Aorta (tissue), 5 donors: ENCODE measurements at regions of chr2 and their contacts with region 1.

Region 1: DNA sequence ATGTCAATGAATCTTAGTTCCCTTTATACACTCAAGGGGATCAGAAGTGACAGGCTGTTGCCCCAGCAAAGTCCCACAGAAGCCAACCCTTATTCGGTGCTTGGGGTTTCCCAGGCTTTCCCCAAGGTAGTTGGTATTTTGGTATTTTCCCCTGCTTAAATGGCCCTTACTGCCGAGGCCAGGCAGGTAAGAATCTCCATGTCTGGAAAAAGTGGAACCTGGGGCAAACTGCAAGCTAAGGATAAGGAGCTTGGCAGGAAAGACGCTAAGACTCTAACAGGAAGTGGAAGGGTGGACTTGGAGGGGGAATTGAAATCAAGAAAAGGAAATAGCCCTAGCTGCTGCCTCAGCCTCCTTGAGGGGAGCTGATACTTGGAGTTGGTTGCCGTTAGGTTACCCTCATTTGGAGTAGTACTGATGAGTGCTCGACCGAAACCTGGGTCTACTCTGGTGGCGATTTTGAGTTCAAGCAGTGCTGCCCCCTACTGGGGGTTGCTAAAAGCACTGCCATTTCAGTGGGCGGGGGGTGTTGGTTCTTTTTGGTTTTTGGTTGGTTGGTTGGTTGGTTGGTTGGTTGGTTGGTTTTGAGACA is 3.3 kb upstream of the GPBAR1 start:
- DNase-seq: peak in 1 of 2 donors; percentile 67
- ATAC-seq: peak; percentile 33
- H3K4me3 ChIP-seq: no peak overlapping the region
- H3K27ac ChIP-seq: no peak overlapping the region
- H3K4me1 ChIP-seq: no peaks in the 10 kb centered on the region
- H3K27me3 ChIP-seq: no peaks in the 10 kb centered on the region

Region 2: GRCh38 chr2:218186355-218186766 is 71.1 kb before region 1 on chr2:
- intact Hi-C with region 1: loop called in 1 of 2 experiments (anchors 5 kb)
- DNase-seq: peak; percentile 70 to 83
- ATAC-seq: peak; percentile 89
- H3K4me3 ChIP-seq: no peak overlapping the region
- H3K27ac ChIP-seq: no peak overlapping the region
- H3K4me1 ChIP-seq: peaks cover 0 to 3% of the 10 kb centered on the region in 2 donors
- H3K27me3 ChIP-seq: no peaks in the 10 kb centered on the region

Region 3: GRCh38 chr2:218322895-218323808 is 65.7 kb after region 1 on chr2:
- intact Hi-C with region 1: no loop called
- DNase-seq: peak; percentile 87 to 90
- ATAC-seq: peak; percentile 82
- H3K4me3 ChIP-seq: peak overlapping the region; percentile 64 to 70
- H3K27ac ChIP-seq: no peak overlapping the region
- H3K4me1 ChIP-seq: no peaks in the 10 kb centered on the region
- H3K27me3 ChIP-seq: no peaks in the 10 kb centered on the region